ENCODE measurements at regions of chr10 and their contacts with region 1.

Region 1: GRCh38 chr10:47421057-47421952 is 37.2 kb upstream of the ZNF488 start:
- ATAC-seq: peak in 2 of 8 experiments; percentile 91 to 94
- H3K4me3 ChIP-seq: no peak overlapping the region
- H3K27ac ChIP-seq: no peak overlapping the region
- H3K4me1 ChIP-seq: peaks cover 0 to 3% of the 10 kb centered on the region in 2 donors

Region 2: GRCh38 chr10:47374611-47375536 is 46.4 kb before region 1 on chr10:
- in situ Hi-C with region 1: loop called in 1 of 9 experiments (anchors 10 kb)
- ATAC-seq: no peak
- H3K4me3 ChIP-seq: no peak overlapping the region
- H3K27ac ChIP-seq: no peak overlapping the region
- H3K4me1 ChIP-seq: peaks cover 7 to 8% of the 10 kb centered on the region in 2 donors